Heart left ventricle (tissue), 16 donors: ENCODE measurements at regions of chr13 and their contacts with region 1.

Region 1: DNA sequence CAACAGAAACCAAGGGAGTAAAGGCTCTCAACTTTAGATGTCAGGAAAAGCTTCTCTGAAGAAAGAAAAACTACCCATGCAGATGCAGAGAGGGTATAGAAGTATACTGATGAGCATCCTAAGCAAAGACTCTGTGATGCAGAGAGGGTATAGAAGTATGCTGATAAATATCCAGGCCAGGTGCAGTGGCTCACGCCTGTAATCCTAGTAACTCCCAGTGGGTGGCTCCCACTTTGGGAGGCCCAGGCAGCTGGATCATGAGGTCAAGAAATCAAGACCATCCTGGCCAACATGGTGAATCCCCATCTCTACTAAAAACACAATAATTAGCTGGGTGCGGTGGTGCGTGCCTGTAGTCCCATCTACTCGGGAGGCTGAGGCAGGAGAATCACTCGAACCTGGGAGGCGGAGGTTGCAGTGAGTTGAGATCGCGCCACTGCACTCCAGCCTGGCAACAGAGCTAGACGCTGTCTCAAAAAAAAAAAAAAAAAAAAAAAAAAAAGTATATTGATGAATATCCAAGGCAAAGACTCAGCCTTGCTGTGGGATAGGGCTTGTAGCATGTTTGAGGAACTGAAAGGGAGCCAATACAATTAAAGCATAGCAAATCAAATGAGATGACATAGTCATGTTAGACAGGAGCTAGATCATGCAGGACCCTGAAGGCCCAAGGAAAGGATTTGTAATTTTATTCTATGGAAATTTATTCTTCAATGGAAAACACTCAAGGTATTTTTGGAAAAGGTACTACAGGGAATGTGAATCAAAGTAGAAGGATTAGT is 14.9 kb downstream of the UBL3 start:
- DNase-seq: no peak
- ATAC-seq: no peak
- H3K4me3 ChIP-seq: no peak overlapping the region
- H3K27ac ChIP-seq: no peak overlapping the region
- H3K4me1 ChIP-seq: peaks cover 0 to 35% (median 9%) of the 10 kb centered on the region in 12 donors
- H3K27me3 ChIP-seq: no peaks in the 10 kb centered on the region
- CTCF ChIP-seq: no peak
- POLR2A ChIP-seq: no peak

Region 2: DNA sequence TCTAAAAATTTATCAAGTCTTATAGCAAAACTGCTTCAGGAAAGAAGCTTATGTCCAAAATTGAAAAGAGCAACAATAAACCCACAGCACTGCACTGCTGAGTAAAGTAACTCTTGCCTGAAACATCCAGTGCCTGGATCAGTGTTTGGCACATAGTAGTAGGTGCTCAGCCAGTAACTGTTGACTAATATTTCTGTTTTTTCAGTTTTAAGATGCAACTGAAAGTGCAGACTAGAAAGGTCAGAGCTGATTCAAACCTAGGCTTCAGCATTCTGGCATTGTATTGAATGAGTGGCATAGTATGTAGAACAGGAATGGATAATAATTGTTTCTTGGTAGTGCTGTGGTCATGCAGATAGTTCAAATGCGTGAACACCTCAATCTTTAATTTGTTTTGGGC is 52.7 kb before region 1 on chr13:
- intact Hi-C with region 1: loop called in 5 of 10 experiments (anchors 10 kb)
- DNase-seq: no peak
- ATAC-seq: no peak
- H3K4me3 ChIP-seq: no peak overlapping the region
- H3K27ac ChIP-seq: no peak overlapping the region
- H3K4me1 ChIP-seq: peaks cover 0 to 16% (median 6%) of the 10 kb centered on the region in 12 donors
- H3K27me3 ChIP-seq: no peaks in the 10 kb centered on the region
- CTCF ChIP-seq: no peak
- POLR2A ChIP-seq: no peak